Transverse colon (tissue), 4 donors: ENCODE measurements at regions of chr16 and their contacts with region 1.

Region 1: GRCh38 chr16:73354434-73354833 is 306.5 kb upstream of the ZFHX3 start:
- DNase-seq: no peak
- H3K4me3 ChIP-seq: no peak overlapping the region
- H3K27ac ChIP-seq: no peak overlapping the region
- H3K4me1 ChIP-seq: no peaks in the 10 kb centered on the region
- H3K27me3 ChIP-seq: no peaks in the 10 kb centered on the region
- CTCF ChIP-seq: no peak
- EP300 ChIP-seq: no peak
- POLR2A ChIP-seq: no peak

Region 2: DNA sequence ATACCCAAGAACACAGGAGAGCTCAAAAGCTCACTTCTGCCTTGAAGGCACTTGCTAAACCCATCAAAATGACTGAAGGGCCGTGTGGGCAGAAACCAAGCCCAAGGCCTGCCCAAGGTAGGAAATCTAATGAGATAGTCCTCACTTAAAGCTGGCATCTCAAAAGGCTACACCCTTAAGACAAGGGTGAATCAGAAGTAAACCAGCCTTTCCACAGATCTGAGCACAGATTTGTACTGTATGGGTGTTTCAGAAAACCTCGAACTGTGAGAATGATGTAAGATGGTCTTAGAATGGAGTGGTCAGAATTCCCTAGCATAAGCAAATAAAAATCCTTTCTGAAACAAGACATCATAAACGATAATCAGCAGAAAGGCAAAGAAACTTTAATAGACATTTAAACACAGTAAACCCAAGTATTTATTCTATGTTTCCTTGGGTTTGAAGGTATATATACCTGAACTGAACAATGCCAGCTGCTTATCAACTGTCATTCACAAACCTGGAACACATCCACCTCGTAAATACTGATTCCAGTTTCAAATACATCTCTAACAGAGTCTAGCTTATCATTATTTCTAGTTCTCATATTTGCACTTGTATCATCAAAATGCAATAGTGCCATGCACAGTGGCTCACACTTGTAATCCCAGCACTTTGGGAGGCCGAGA is 1214.7 kb after region 1 on chr16:
- in situ Hi-C with region 1: no loop called
- intact Hi-C with region 1: loop called (anchors 5 kb)
- DNase-seq: no peak
- H3K4me3 ChIP-seq: no peak overlapping the region
- H3K27ac ChIP-seq: no peak overlapping the region
- H3K4me1 ChIP-seq: peaks cover 11 to 60% (median 22%) of the 10 kb centered on the region in 4 donors
- H3K27me3 ChIP-seq: no peaks in the 10 kb centered on the region
- CTCF ChIP-seq: no peak
- EP300 ChIP-seq: no peak
- POLR2A ChIP-seq: no peak